BJ (cell line): ENCODE measurements at regions of chr9 and their contacts with region 1.

Region 1: GRCh38 chr9:81521892-81522291 is 167.5 kb downstream of the TLE1 start:
- DNase-seq: no peak
- H3K4me3 ChIP-seq: no peak overlapping the region
- H3K27me3 ChIP-seq: no peaks in the 10 kb centered on the region; the same call in 1 of the 2 replicates
- CTCF ChIP-seq: no peak

Region 2: DNA sequence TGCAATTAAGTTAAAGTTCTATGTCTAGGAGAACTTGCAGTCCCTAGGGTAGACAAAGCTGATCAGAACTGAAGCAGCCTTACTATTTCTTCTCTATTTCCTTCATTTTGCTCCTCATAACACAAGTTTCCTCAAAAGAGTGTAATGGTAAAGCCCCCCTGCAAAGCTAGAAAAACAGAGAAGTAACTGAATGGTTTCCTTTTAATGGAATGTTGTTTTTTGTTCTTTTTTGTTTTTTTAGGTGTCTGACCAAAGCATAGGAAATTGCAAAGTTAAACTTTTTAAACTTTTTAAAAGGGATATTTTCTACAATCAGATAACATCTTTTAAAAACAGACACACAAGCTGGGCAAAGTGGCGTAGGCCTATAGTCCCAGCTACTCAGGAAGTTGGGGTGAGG is 21.8 kb after region 1 on chr9:
- CTCF ChIA-PET with region 1: no interaction called
- POLR2A ChIA-PET with region 1: no interaction called
- DNase-seq: no peak
- H3K4me3 ChIP-seq: no peak overlapping the region
- H3K27me3 ChIP-seq: no peaks in the 10 kb centered on the region
- CTCF ChIP-seq: no peak

Region 3: GRCh38 chr9:81570083-81570482 is 48.2 kb after region 1 on chr9:
- CTCF ChIA-PET with region 1: interaction called, 10 read pairs
- POLR2A ChIA-PET with region 1: no interaction called
- DNase-seq: no peak
- H3K4me3 ChIP-seq: no peak overlapping the region
- H3K27me3 ChIP-seq: no peaks in the 10 kb centered on the region
- CTCF ChIP-seq: no peak

Region 4: GRCh38 chr9:81689343-81690190 is 167.7 kb after region 1 on chr9 and contains the start of gene TLE1:
- CTCF ChIA-PET with region 1: interaction called, 17 read pairs
- POLR2A ChIA-PET with region 1: no interaction called
- DNase-seq: peak; percentile 96
- H3K4me3 ChIP-seq: peak within 1 kb of the TSS; percentile 69
- H3K27me3 ChIP-seq: peaks cover 19% of the 10 kb centered on the region
- CTCF ChIP-seq: 0 out of 2 replicates have a peak, but pooled peaks have one; percentile 12
- polyA plus RNA-seq, gene TLE1: 8.8 and 9.6 TPM in 2 replicates